ENCODE measurements at regions of chr7 and their contacts with region 1.

Region 1: DNA sequence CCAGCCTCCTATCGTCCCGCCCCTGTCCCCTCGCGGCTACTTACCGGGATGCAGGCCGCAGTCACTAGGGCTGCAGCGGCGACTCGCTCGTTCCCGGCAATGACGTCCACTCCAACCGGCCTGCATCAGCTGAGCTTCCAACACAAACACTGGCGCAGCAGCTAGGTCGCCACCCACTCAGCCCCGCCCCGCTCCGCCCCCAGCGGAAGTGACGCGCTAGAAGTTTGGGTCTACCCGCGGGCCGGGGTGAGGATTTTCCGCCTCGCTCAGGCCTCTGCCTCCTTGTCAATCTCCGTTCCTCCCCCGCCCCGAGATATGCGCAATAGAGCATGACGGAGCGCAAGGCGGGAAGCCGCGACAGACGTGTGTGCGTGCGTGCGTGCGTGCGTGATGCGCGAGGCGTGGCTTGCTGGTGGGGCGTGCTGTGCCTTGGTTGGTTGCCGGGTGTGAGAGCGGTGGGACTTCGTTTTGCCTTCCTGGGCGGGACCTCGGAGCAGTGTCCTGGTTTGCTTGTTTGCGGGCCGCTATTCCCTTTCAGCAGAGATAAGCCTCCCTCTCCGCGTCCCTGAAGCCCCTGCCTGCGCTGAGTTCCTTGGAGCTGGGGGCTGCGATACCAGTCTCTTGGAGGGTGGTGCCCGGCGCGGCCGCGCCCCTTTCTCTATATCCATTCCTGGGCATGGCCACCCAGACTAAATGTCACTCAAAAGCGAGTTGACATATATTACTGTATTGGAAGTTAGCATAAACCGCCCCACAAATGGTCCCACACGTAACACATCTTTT is at the start of gene PNPLA8:
- DNase-seq: peak; percentile 97
- H3K4me3 ChIP-seq: peak within 1 kb of the TSS; percentile 83 to 89
- H3K27ac ChIP-seq: peak within 1 kb of the TSS; percentile 94
- H3K4me1 ChIP-seq: peaks cover 14 to 24% of the 10 kb centered on the region in 2 experiments; a peak in 3 of 4 replicates
- H3K27me3 ChIP-seq: no peaks in the 10 kb centered on the region
- CTCF ChIP-seq: no peak
- EP300 ChIP-seq: peak in 1 of 2 experiments; percentile 31; a peak in 1 of 4 replicates
- RAD21 ChIP-seq: 0 out of 2 replicates have a peak, but pooled peaks have one; percentile 13
- polyA plus RNA-seq, gene PNPLA8: 7.2 and 9.8 TPM in 2 replicates

Region 2: GRCh38 chr7:108569381-108570145 is 43.4 kb after region 1 on chr7 and contains the starts of genes DNAJB9 and THAP5:
- CTCF ChIA-PET with region 1: no interaction called
- POLR2A ChIA-PET with region 1: interaction called, 34 read pairs
- DNase-seq: peak; percentile 98
- H3K4me3 ChIP-seq: peak within 1 kb of the TSS; percentile 79 to 80
- H3K27ac ChIP-seq: peak within 1 kb of the TSS; percentile 94 to 99
- H3K4me1 ChIP-seq: peaks cover 18 to 38% of the 10 kb centered on the region in 2 experiments; a peak in 3 of 4 replicates
- H3K27me3 ChIP-seq: no peaks in the 10 kb centered on the region
- CTCF ChIP-seq: no peak
- EP300 ChIP-seq: peak in 1 of 2 experiments; percentile 15; a peak in 1 of 4 replicates
- RAD21 ChIP-seq: no peak
- polyA plus RNA-seq, gene DNAJB9: 6.4 and 6.6 TPM in 2 replicates
- polyA plus RNA-seq, gene THAP5: 4.2 and 5.3 TPM in 2 replicates

Region 3: GRCh38 chr7:108660460-108660859 is 134.3 kb after region 1 on chr7:
- CTCF ChIA-PET with region 1: no interaction called
- POLR2A ChIA-PET with region 1: no interaction called
- DNase-seq: peak; percentile 79
- H3K4me3 ChIP-seq: no peak overlapping the region; a peak in 1 of 4 replicates
- H3K27ac ChIP-seq: no peak overlapping the region
- H3K4me1 ChIP-seq: no peaks in the 10 kb centered on the region
- H3K27me3 ChIP-seq: no peaks in the 10 kb centered on the region
- CTCF ChIP-seq: peak; percentile 63
- EP300 ChIP-seq: no peak
- RAD21 ChIP-seq: peak; percentile 79

Measured in SK-N-SH (cell line).